Natural killer cell (primary cell): ENCODE measurements at regions of chr9 and their contacts with region 1.

Region 1: GRCh38 chr9:4679268-4680172 is at the start of gene CDC37L1:
- DNase-seq: peak; percentile 98 to 100
- ATAC-seq: peak; percentile 93 to 99 (median 97)
- H3K4me3 ChIP-seq: peak within 1 kb of the TSS; percentile 85
- H3K4me3 Mint-ChIP-seq: no peak within 1 kb of the TSS
- H3K27ac ChIP-seq: peak within 1 kb of the TSS; percentile 94
- H3K27ac Mint-ChIP-seq: no peak within 1 kb of the TSS
- H3K4me1 ChIP-seq: peaks cover 8% of the 10 kb centered on the region
- H3K4me1 Mint-ChIP-seq: peaks cover 11% of the 10 kb centered on the region in 2 donors
- H3K27me3 ChIP-seq: no peaks in the 10 kb centered on the region
- H3K27me3 Mint-ChIP-seq: peaks cover 0 to 5% of the 10 kb centered on the region in 2 donors
- CTCF ChIP-seq: peak; percentile 67
- total RNA-seq, gene CDC37L1: 11.6 to 20.1 (median 13.0) TPM

Region 2: GRCh38 chr9:3541206-3541605 is 1138.3 kb before region 1 on chr9:
- intact Hi-C with region 1: no loop called
- DNase-seq: no peak
- ATAC-seq: no peak
- H3K4me3 ChIP-seq: no peak overlapping the region
- H3K4me3 Mint-ChIP-seq: no peak overlapping the region
- H3K27ac ChIP-seq: no peak overlapping the region
- H3K27ac Mint-ChIP-seq: peak overlapping the region in 1 of 2 donors; percentile 31
- H3K4me1 ChIP-seq: no peaks in the 10 kb centered on the region
- H3K4me1 Mint-ChIP-seq: peaks cover 30 to 32% of the 10 kb centered on the region in 2 donors
- H3K27me3 ChIP-seq: no peaks in the 10 kb centered on the region
- H3K27me3 Mint-ChIP-seq: no peaks in the 10 kb centered on the region
- CTCF ChIP-seq: no peak

Region 3: DNA sequence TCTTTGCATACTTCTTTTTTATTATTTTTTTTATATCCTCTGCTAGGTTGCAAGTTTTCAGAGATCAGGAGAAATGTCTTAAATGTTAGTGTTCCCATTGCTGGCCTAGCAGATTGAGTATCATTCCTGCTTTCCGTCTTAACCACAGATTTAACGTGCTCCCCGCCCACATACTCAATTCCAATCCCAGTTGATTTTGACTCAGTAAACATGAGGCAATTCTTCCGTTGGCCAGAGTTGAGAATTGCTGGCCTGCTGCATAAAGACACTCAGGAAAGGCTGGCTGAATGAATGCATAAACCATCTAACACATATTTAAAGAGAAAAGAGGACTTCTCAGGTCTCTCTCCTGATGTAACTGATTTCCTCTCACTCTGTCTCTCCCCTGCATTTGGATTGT is 64.3 kb before region 1 on chr9:
- intact Hi-C with region 1: no loop called
- DNase-seq: no peak
- ATAC-seq: no peak
- H3K4me3 ChIP-seq: no peak overlapping the region
- H3K4me3 Mint-ChIP-seq: no peak overlapping the region
- H3K27ac ChIP-seq: no peak overlapping the region
- H3K27ac Mint-ChIP-seq: no peak overlapping the region
- H3K4me1 ChIP-seq: peaks cover 6% of the 10 kb centered on the region
- H3K4me1 Mint-ChIP-seq: peaks cover 9% of the 10 kb centered on the region in 2 donors
- H3K27me3 ChIP-seq: no peaks in the 10 kb centered on the region
- H3K27me3 Mint-ChIP-seq: no peaks in the 10 kb centered on the region
- CTCF ChIP-seq: no peak

Region 4: DNA sequence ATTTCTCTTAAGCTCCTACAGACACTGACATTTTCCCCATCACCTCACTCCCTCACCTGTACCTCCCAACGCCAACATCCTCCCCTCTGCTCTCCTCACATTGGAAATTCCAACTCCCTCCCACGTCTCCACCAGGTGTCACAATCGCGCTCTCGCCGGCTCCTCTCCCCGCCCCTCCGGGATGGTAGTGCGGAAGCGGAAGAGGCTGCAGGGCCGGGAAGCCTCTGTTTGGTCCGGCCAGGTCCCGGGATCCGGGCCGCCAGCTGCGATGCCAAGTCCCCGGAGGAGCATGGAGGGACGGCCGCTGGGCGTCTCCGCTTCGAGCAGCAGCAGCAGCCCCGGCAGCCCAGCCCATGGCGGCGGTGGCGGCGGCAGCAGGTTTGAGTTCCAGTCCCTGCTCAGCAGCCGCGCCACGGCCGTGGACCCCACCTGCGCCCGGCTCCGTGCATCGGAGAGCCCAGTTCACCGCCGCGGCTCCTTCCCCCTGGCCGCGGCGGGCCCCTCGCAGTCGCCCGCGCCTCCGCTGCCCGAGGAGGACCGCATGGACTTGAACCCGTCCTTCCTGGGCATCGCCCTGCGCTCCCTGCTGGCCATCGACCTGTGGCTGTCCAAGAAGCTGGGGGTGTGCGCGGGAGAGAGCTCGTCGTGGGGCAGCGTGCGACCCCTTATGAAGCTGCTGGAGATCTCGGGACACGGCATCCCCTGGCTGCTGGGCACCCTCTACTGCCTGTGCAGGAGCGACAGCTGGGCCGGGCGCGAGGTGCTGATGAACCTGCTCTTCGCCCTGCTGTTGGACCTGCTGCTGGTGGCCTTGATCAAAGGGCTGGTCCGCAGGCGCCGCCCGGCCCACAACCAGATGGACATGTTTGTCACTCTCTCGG is 17.2 kb before region 1 on chr9 and contains the start of gene PLPP6:
- intact Hi-C with region 1: loop called (anchors 1 kb)
- DNase-seq: peak; percentile 66 to 92
- ATAC-seq: peak; percentile 78 to 89 (median 87)
- H3K4me3 ChIP-seq: peak within 1 kb of the TSS; percentile 57
- H3K4me3 Mint-ChIP-seq: peak within 1 kb of the TSS; percentile 98
- H3K27ac ChIP-seq: peak within 1 kb of the TSS; percentile 80
- H3K27ac Mint-ChIP-seq: peak within 1 kb of the TSS; percentile 88 to 91
- H3K4me1 ChIP-seq: peaks cover 22% of the 10 kb centered on the region
- H3K4me1 Mint-ChIP-seq: peaks cover 54 to 60% of the 10 kb centered on the region in 2 donors
- H3K27me3 ChIP-seq: no peaks in the 10 kb centered on the region
- H3K27me3 Mint-ChIP-seq: peaks cover 0 to 5% of the 10 kb centered on the region in 2 donors
- CTCF ChIP-seq: peak; percentile 53
- total RNA-seq, gene PLPP6: 3.7 to 5.6 (median 3.8) TPM

Region 5: DNA sequence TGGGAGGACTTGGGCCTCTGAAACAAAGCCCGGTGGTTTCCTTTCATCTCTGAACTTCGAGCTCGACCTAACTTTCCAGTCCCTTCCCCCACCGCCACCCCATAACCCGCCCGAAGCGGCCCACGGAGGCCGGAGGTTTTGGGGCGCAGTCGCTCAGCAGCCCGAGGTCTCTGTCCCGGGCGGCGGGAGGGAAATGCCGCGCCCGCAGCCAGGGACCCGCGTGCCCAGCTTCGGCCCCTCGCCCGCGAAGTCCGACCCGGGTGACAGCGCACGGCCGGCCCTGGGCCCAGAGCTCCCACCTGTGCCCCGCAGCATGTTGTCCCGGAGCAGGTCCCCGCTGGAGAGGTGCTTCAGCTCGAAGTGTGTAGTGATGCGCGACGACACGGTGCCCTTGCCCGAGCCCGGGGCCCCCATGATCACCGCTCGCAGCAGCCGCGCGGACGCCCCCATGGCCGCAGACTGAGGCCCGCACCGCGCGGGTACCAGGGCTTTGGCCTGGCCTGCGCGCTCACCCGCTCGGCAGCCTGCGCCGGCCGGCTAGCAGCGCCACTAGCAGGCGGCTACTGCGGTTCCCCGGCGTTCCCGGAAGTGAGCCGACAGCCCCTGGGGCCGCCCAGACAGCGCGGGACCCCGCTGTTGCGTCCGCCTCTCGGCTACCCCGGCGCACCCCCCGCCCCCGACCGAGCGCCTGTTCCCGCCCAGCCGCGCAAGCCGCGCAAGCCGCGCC is 61.3 kb after region 1 on chr9 and contains the start of gene AK3:
- intact Hi-C with region 1: loop called (anchors 1 kb)
- DNase-seq: peak; percentile 88 to 91
- ATAC-seq: peak; percentile 91 to 98 (median 94)
- H3K4me3 ChIP-seq: peak within 1 kb of the TSS; percentile 94
- H3K4me3 Mint-ChIP-seq: peak within 1 kb of the TSS; percentile 93
- H3K27ac ChIP-seq: peak within 1 kb of the TSS; percentile 72
- H3K27ac Mint-ChIP-seq: peak within 1 kb of the TSS; percentile 90 to 91
- H3K4me1 ChIP-seq: peaks cover 20% of the 10 kb centered on the region
- H3K4me1 Mint-ChIP-seq: peaks cover 30 to 33% of the 10 kb centered on the region in 2 donors
- H3K27me3 ChIP-seq: no peaks in the 10 kb centered on the region
- H3K27me3 Mint-ChIP-seq: no peaks in the 10 kb centered on the region
- CTCF ChIP-seq: no peak
- total RNA-seq, gene AK3: 18.6 to 23.1 (median 21.0) TPM